Transverse colon (tissue), 4 donors: ENCODE measurements at regions of chr3 and their contacts with region 1.

Region 1: GRCh38 chr3:197533927-197534340 is 21.8 kb downstream of the BDH1 start:
- DNase-seq: no peak
- H3K4me3 ChIP-seq: no peak overlapping the region
- H3K27ac ChIP-seq: no peak overlapping the region
- H3K4me1 ChIP-seq: no peaks in the 10 kb centered on the region
- H3K27me3 ChIP-seq: no peaks in the 10 kb centered on the region
- CTCF ChIP-seq: no peak
- EP300 ChIP-seq: no peak
- POLR2A ChIP-seq: no peak

Region 2: DNA sequence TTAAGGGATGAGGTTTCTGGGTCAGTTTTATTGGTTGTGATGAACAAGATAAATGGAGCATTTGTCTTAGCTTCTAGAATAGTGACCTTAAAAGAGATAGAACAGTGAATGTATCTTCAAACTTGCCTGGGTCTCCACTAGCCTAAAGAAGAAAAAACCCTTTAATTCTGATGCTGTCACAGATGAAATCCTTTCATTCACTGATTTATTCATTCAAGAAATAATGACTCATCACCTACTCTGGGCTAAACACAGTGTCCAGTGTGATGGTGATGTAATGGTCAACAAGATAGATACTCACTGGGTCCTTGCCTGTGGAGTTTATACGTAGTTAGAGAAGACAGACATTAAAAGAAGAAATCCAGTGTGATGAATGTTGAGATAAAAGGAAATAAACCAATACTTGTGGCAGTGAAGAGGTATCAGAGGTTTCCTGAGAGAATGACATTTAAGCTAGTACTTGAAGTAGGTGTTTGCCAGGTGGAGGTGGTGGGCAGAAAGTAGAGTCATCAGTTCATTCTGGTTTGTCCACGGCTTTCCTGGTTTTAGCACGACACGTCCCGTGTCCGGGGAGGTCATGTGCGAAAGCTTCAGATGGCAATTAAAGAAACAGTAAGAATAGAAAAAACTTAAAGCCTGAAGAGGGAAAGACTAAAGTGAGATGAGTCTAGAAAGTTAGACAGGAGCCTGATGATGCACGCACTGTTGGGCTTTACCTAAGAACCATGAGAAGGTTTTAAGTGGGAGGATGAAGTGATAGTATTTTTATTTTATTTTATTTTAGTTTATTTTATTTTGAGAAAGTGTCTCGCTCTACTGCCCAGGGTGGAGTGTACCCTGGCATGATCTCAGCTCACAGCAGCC is 775.8 kb before region 1 on chr3:
- in situ Hi-C with region 1: no loop called
- intact Hi-C with region 1: no loop called
- DNase-seq: no peak
- H3K4me3 ChIP-seq: no peak overlapping the region
- H3K27ac ChIP-seq: no peak overlapping the region
- H3K4me1 ChIP-seq: peaks cover 0 to 27% (median 15%) of the 10 kb centered on the region in 4 donors
- H3K27me3 ChIP-seq: no peaks in the 10 kb centered on the region
- CTCF ChIP-seq: no peak
- EP300 ChIP-seq: no peak
- POLR2A ChIP-seq: no peak

Region 3: DNA sequence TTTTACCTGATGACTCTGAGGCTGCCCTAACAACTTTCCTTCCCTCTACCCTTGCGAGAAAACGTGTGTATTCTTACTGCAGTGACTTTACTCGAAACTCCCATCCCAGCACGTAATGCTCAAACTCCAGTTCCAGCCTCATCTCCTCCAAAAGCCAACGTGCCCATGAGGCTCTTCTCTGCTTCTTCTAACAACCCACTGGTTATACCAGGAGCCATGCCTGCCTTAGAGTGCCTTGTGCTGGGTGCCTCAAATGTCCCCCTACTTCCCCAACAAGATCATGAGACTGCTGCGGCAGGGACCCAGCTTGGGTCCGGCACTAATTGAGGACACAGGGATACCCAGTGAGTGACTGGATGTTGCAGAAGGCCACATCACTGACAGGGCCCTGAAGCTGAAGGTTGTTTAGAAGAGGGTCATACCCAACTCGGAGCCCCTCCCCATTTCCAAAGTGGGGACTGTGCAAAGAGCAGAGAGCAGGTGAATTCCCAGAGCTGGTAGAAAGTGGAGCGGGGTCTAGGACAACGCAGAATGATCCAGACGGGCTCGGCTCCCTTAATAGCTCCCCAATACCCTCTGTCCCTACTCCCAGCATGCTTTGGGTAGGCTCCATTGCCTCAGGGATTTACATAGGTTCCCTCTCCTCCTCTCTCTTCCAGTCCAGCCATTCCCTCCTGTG is 49.6 kb before region 1 on chr3:
- in situ Hi-C with region 1: no loop called
- intact Hi-C with region 1: loop called (anchors 2 kb)
- DNase-seq: no peak
- H3K4me3 ChIP-seq: no peak overlapping the region
- H3K27ac ChIP-seq: no peak overlapping the region
- H3K4me1 ChIP-seq: no peaks in the 10 kb centered on the region
- H3K27me3 ChIP-seq: no peaks in the 10 kb centered on the region
- CTCF ChIP-seq: no peak
- EP300 ChIP-seq: no peak
- POLR2A ChIP-seq: no peak